ENCODE measurements at regions of chr14 and their contacts with region 1.

Region 1: DNA sequence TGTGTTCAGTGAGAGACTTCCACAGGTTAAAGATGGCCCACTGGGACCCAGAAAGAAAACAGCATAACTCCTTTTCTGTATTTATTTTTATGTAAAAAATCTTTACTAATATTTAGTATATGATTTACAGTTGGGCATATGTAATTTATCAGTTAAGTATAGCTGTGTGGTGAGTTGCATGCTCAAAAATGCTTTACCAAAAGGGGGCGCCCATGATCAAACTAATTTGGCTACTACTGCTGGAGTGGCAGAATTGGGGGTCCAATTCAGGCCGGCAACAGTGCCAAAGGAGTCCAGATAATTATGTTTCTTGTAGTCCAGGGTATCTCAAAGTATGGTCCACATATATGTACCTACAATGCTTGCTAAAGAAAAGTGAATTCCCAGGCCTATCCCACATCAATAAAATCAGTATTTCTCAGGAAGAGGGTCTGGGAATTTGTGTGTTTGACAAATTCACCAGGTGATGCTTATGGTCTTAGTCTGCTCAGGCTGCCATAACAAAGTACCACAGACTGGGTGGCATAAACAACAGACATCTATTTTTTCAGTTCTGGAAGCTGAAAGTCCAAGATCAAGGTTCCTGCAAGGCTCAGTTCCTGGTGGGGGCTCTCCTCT is 152.0 kb downstream of the KTN1 start:
- DNase-seq: no peak
- ATAC-seq: no peak
- H3K4me3 Mint-ChIP-seq: no peak overlapping the region
- H3K27ac Mint-ChIP-seq: no peak overlapping the region
- H3K4me1 Mint-ChIP-seq: no peaks in the 10 kb centered on the region
- H3K27me3 Mint-ChIP-seq: no peaks in the 10 kb centered on the region
- CTCF ChIP-seq: no peak

Region 2: DNA sequence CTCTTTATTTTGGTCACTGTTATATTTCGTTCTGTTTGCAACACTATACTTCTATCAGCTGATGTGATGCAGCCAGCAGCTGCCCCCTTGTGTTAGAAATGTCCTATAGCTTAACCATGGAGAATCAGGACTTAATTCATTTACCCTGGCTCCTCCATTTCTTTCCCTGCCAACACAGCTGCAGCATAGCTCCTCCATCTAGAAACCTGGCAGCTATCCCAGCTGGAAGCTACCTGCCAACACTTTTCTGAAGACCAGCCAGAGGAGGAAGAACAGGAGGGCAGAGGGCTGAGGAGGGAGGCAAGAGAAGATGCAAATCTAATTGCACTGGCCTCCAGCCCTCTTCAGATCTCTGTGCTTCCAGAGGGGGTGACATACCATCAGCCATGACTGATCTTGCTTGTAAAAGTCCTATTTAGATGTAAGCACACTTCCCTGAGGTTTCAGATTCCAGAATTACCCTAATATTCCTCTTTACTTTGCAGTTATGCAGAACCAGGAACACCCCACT is 690.8 kb after region 1 on chr14:
- CTCF ChIA-PET with region 1: interaction called, 6 read pairs
- POLR2A ChIA-PET with region 1: no interaction called
- intact Hi-C with region 1: loop called (anchors 1 kb)
- DNase-seq: no peak
- ATAC-seq: no peak
- H3K4me3 Mint-ChIP-seq: no peak overlapping the region
- H3K27ac Mint-ChIP-seq: no peak overlapping the region
- H3K4me1 Mint-ChIP-seq: no peaks in the 10 kb centered on the region
- H3K27me3 Mint-ChIP-seq: no peaks in the 10 kb centered on the region
- CTCF ChIP-seq: no peak